Naive thymus-derived CD4-positive, alpha-beta T cell (primary cell): ENCODE measurements at regions of chr13 and their contacts with region 1.

Region 1: DNA sequence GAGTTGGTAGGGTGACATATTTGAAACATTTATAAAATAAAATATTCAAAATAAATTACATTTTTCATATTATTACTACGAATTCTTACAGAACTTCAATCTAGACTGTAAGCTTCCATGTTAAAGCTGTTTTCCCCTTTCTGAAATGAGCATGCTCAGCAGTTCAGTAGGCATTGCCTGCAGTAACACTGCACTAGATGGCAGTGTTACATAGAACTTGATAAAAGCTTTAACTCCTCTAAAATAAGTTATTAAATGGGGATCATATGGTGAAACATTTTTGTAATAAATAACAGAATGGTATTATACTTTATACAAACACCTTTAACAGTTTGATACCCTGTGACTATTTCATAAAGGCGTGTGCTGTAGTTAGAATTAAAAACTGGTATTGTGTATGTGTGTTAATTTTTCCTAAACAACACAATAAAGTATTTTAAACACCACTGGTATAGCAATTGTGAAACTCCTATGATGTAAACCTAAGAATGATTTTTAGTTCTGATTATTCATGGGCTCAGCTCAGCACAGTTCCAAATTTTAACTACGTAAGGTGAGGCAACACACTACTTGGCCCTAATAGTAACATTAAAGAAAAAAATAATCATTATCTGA is 11.6 kb upstream of the GPR18 start:
- DNase-seq: peak in 7 of 9 donors; percentile 51 to 71 (median 58)
- ATAC-seq: peak; percentile 84
- H3K4me3 ChIP-seq: no peak overlapping the region
- H3K4me3 Mint-ChIP-seq: peak overlapping the region in 1 of 10 donors; percentile 52
- H3K27ac ChIP-seq: peak overlapping the region; percentile 46
- H3K27ac Mint-ChIP-seq: peak overlapping the region in 8 of 9 donors; percentile 63 to 94 (median 92)
- H3K4me1 ChIP-seq: peaks cover 38 to 54% of the 10 kb centered on the region in 2 donors
- H3K4me1 Mint-ChIP-seq: peaks cover 35 to 73% (median 65%) of the 10 kb centered on the region in 7 donors
- H3K27me3 ChIP-seq: no peaks in the 10 kb centered on the region
- H3K27me3 Mint-ChIP-seq: no peaks in the 10 kb centered on the region

Region 2: DNA sequence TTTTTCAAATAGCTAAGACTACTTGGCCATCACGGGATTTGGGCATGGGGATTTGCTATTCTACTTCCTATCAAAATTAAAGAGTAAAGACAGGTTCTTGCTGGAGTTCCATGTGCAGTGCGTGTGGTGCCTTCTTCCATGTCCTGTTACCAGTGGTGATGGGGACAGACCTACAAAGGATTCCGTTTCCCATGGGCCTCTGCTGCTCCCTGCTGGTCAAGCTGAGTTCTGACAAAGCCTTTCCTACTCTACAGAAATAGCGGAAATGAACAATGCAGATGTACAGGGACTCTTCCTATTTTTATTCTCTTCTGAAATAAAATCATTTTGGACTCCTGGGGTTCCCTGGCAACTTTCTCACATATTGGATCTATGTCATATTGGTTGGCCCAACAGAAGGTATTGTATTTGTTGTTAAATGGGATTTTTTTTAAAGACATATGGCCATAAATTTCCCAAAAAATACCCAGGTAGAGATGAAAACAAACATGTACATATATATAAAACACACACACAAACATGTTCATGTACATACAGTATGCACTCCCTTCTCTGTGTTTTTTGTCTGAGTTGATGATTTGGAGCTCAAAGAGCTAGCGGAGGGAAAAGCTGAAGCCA is 426.8 kb before region 1 on chr13:
- CTCF ChIA-PET with region 1: no interaction called
- POLR2A ChIA-PET with region 1: no interaction called
- intact Hi-C with region 1: loop called in 1 of 2 experiments (anchors 5 kb)
- DNase-seq: peak; percentile 20 to 65 (median 48)
- ATAC-seq: peak; percentile 87
- H3K4me3 ChIP-seq: no peak overlapping the region
- H3K4me3 Mint-ChIP-seq: no peak overlapping the region
- H3K27ac ChIP-seq: no peak overlapping the region
- H3K27ac Mint-ChIP-seq: peak overlapping the region in 5 of 9 donors; percentile 13 to 60 (median 46)
- H3K4me1 ChIP-seq: no peaks in the 10 kb centered on the region
- H3K4me1 Mint-ChIP-seq: peaks cover 0 to 12% (median 9%) of the 10 kb centered on the region in 7 donors
- H3K27me3 ChIP-seq: no peaks in the 10 kb centered on the region
- H3K27me3 Mint-ChIP-seq: no peaks in the 10 kb centered on the region

Region 3: GRCh38 chr13:99062593-99062992 is 207.1 kb before region 1 on chr13:
- CTCF ChIA-PET with region 1: no interaction called
- POLR2A ChIA-PET with region 1: no interaction called
- intact Hi-C with region 1: no loop called
- DNase-seq: no peak
- ATAC-seq: no peak
- H3K4me3 ChIP-seq: no peak overlapping the region
- H3K4me3 Mint-ChIP-seq: peak overlapping the region in 8 of 10 donors; percentile 12 to 60 (median 28)
- H3K27ac ChIP-seq: no peak overlapping the region
- H3K27ac Mint-ChIP-seq: peak overlapping the region in 6 of 9 donors; percentile 19 to 86 (median 66)
- H3K4me1 ChIP-seq: peaks cover 14 to 73% of the 10 kb centered on the region in 2 donors
- H3K4me1 Mint-ChIP-seq: peaks cover 56 to 99% (median 95%) of the 10 kb centered on the region in 7 donors
- H3K27me3 ChIP-seq: no peaks in the 10 kb centered on the region
- H3K27me3 Mint-ChIP-seq: peaks cover 0 to 22% (median 0%) of the 10 kb centered on the region in 5 donors

Region 4: DNA sequence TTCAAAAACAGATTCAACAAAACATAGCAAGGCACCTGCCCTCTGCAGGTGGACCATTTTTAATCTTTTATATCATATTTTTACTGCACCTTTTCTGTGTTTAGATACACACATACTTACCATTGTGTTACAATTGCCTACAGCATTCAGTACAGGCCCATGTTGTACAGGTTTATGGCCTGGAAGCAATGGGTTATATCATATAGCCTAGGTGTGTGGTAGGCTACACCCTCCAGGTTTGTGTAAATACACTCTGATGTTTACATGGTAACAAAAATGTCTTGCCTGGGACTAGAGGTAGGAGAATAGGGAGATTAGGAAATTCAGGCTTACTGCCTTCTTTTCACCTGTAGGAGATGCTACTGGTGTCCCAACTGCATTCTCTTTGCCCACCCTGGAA is 77.3 kb before region 1 on chr13:
- CTCF ChIA-PET with region 1: interaction called, 242 read pairs
- POLR2A ChIA-PET with region 1: interaction called, 105 read pairs
- intact Hi-C with region 1: loop called (anchors 1 kb)
- DNase-seq: no peak
- ATAC-seq: no peak
- H3K4me3 ChIP-seq: no peak overlapping the region
- H3K4me3 Mint-ChIP-seq: no peak overlapping the region
- H3K27ac ChIP-seq: no peak overlapping the region
- H3K27ac Mint-ChIP-seq: peak overlapping the region in 1 of 9 donors; percentile 45
- H3K4me1 ChIP-seq: peaks cover 4 to 13% of the 10 kb centered on the region in 2 donors
- H3K4me1 Mint-ChIP-seq: peaks cover 0 to 30% (median 24%) of the 10 kb centered on the region in 7 donors
- H3K27me3 ChIP-seq: no peaks in the 10 kb centered on the region
- H3K27me3 Mint-ChIP-seq: peaks cover 0 to 3% (median 0%) of the 10 kb centered on the region in 5 donors

Region 5: GRCh38 chr13:99296398-99296797 is 26.7 kb after region 1 on chr13:
- CTCF ChIA-PET with region 1: interaction called, 19 read pairs
- POLR2A ChIA-PET with region 1: interaction called, 94 read pairs
- intact Hi-C with region 1: no loop called
- DNase-seq: peak in 6 of 9 donors; percentile 49 to 69 (median 57)
- ATAC-seq: peak; percentile 59
- H3K4me3 ChIP-seq: peak overlapping the region; percentile 28
- H3K4me3 Mint-ChIP-seq: peak overlapping the region; percentile 73 to 91 (median 82)
- H3K27ac ChIP-seq: peak overlapping the region; percentile 73
- H3K27ac Mint-ChIP-seq: peak overlapping the region; percentile 89 to 98 (median 93)
- H3K4me1 ChIP-seq: peaks cover 78 to 81% of the 10 kb centered on the region in 2 donors
- H3K4me1 Mint-ChIP-seq: peaks cover 60 to 94% (median 88%) of the 10 kb centered on the region in 7 donors
- H3K27me3 ChIP-seq: no peaks in the 10 kb centered on the region
- H3K27me3 Mint-ChIP-seq: no peaks in the 10 kb centered on the region

Region 6: DNA sequence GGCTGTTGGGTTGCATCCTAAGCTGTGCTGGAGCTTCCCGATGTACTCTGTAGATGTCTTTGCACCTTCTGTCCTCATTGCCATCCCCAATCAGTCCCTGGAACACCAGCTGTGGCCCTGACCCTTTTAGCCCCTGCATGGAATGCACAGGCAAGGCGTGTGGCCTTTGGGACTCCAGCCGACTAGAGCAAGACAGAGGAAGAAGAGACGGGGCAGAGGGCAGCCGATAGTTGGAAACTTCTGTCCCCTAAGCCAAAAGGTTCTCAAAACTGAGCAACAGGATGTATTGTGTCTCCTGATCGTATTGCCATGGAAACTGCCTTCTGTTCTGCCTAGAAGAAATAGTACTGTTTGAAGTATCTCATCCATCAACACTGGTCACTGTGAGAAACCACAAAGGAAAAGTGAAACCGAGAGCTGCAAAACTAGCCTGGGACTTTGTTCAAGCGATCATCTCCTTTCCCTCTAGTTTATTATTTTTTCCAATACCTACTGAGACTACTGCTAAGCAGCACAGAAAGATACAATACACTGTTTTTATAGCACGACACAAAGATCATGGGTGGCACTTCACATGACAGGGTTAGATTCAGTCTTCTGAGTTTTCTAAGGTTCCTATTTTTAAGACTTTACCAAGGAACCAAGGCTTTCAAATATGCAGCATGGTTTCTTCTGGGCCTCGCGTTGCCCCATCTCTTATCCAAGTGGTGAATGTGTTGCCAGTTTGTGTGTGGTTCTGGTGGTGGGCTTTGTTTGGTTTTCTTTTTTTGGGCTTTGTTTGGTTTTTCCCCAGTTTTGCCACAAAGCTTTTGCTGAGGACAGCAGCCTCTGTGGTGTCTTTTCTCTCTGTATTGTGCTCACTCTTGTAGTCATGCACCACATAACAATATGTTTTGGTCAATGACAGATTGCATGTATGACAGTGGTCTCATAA is 86.7 kb after region 1 on chr13:
- CTCF ChIA-PET with region 1: interaction called, 26 read pairs
- POLR2A ChIA-PET with region 1: interaction called, 33 read pairs
- intact Hi-C with region 1: loop called (anchors 1 kb)
- DNase-seq: peak in 8 of 9 donors; percentile 58 to 94 (median 92)
- ATAC-seq: peak; percentile 77
- H3K4me3 ChIP-seq: peak overlapping the region; percentile 25
- H3K4me3 Mint-ChIP-seq: peak overlapping the region; percentile 66 to 86 (median 78)
- H3K27ac ChIP-seq: peak overlapping the region; percentile 95
- H3K27ac Mint-ChIP-seq: peak overlapping the region; percentile 97 to 100 (median 99)
- H3K4me1 ChIP-seq: peaks cover 95 to 97% of the 10 kb centered on the region in 2 donors
- H3K4me1 Mint-ChIP-seq: peaks cover 78 to 100% (median 100%) of the 10 kb centered on the region in 7 donors
- H3K27me3 ChIP-seq: no peaks in the 10 kb centered on the region
- H3K27me3 Mint-ChIP-seq: no peaks in the 10 kb centered on the region

Region 7: GRCh38 chr13:99417201-99418102 is 147.7 kb after region 1 on chr13:
- CTCF ChIA-PET with region 1: interaction called, 15 read pairs
- POLR2A ChIA-PET with region 1: interaction called, 16 read pairs
- intact Hi-C with region 1: loop called in 1 of 2 experiments (anchors 1 kb)
- DNase-seq: peak in 7 of 9 donors; percentile 58 to 78 (median 77)
- ATAC-seq: peak; percentile 40
- H3K4me3 ChIP-seq: peak overlapping the region; percentile 65
- H3K4me3 Mint-ChIP-seq: peak overlapping the region in 1 of 10 donors; percentile 50
- H3K27ac ChIP-seq: peak overlapping the region; percentile 91
- H3K27ac Mint-ChIP-seq: peak overlapping the region in 1 of 9 donors; percentile 26
- H3K4me1 ChIP-seq: peaks cover 18 to 78% of the 10 kb centered on the region in 2 donors
- H3K4me1 Mint-ChIP-seq: peaks cover 32 to 64% (median 49%) of the 10 kb centered on the region in 7 donors
- H3K27me3 ChIP-seq: no peaks in the 10 kb centered on the region
- H3K27me3 Mint-ChIP-seq: peaks cover 0 to 4% (median 0%) of the 10 kb centered on the region in 5 donors

Region 8: GRCh38 chr13:100514788-100515409 is 1245.2 kb after region 1 on chr13:
- CTCF ChIA-PET with region 1: no interaction called
- POLR2A ChIA-PET with region 1: no interaction called
- intact Hi-C with region 1: loop called in 1 of 2 experiments (anchors 10 kb)
- DNase-seq: peak; percentile 37 to 74 (median 63)
- ATAC-seq: peak; percentile 94
- H3K4me3 ChIP-seq: no peak overlapping the region
- H3K4me3 Mint-ChIP-seq: no peak overlapping the region
- H3K27ac ChIP-seq: no peak overlapping the region
- H3K27ac Mint-ChIP-seq: peak overlapping the region in 1 of 9 donors; percentile 80
- H3K4me1 ChIP-seq: peaks cover 0 to 7% of the 10 kb centered on the region in 2 donors
- H3K4me1 Mint-ChIP-seq: peaks cover 0 to 30% (median 6%) of the 10 kb centered on the region in 7 donors
- H3K27me3 ChIP-seq: no peaks in the 10 kb centered on the region
- H3K27me3 Mint-ChIP-seq: peaks cover 0 to 4% (median 0%) of the 10 kb centered on the region in 5 donors